A549 (cell line): ENCODE measurements at regions of chr18 and their contacts with region 1.

Region 1: GRCh38 chr18:57898506-57899124 is 95.5 kb upstream of the ATP8B1 start:
- DNase-seq: peak in 1 of 2 experiments; percentile 16
- ATAC-seq: no peak
- H3K4me3 ChIP-seq: no peak overlapping the region
- H3K27ac ChIP-seq: peak overlapping the region; percentile 51 to 98
- H3K4me1 ChIP-seq: peaks cover 41% of the 10 kb centered on the region
- CTCF ChIP-seq: no peak
- EP300 ChIP-seq: no peak
- POLR2A ChIP-seq: no peak
- RAD21 ChIP-seq: no peak

Region 2: DNA sequence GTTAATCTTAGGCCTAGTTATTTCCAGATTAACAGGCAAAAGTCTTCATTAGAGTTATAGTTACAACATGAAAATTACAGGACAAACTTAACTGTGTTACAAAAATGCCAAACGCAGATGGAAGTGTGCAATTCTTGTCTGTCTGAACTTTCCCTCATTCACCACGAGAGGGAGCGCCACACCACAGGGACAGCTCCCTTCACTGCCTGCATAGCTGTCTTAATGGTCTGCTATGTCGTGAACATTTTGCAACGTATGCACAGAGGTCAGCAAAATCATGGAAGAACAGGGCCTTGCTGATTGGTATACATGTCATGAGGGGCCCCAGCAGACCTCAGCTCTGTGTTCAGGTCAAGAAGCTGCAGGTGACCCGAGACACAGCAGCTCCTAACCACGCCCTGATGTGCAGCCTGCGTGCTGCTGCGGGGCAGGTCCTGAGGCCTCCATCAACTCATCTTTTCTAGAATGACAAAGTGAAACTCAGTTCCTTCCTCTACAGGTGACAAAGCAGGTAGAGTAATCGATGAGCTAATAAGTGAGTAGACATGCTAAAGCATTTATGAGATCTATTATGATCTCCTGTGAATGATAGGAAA is 16.7 kb before region 1 on chr18:
- CTCF ChIA-PET with region 1: interaction called, 16 read pairs
- POLR2A ChIA-PET with region 1: no interaction called
- DNase-seq: peak; percentile 20 to 84
- ATAC-seq: peak; percentile 94 to 98
- H3K4me3 ChIP-seq: no peak overlapping the region
- H3K27ac ChIP-seq: peak overlapping the region; percentile 67 to 77
- H3K4me1 ChIP-seq: peaks cover 16% of the 10 kb centered on the region
- CTCF ChIP-seq: peak; percentile 83
- EP300 ChIP-seq: no peak
- POLR2A ChIP-seq: no peak
- RAD21 ChIP-seq: peak; percentile 94 to 95

Region 3: DNA sequence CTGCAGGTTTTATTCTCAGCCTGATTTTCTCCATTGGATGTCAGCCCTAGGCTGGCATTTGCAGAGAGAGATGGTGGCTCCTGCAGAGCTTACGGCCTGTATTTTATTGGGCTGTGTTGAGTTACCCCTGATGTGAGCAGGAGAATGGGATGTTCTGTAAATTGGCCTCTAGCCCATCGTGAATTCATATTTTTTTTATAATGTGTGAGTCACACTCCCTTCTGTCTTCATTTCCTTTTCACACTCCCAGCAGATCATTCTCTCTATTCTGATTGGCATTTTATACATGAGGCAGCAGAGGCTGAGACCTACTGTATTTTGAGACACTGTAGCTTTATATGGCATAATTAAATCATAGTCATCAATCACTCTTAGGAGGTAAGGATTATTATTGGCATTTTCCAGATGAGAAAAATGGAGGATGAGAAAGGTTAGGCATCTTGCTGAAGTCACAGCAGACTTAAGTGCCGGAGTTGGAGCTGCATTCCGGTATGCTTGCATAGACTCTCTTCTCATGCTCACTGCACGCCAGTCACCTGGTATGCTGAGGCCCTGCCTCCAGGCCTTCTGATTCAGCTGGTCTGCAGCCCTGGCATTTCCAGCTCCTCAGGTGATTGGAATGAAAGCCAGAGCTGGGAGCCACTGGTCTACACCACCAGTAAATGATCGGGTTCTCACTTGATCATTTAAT is 287.8 kb after region 1 on chr18:
- CTCF ChIA-PET with region 1: no interaction called
- POLR2A ChIA-PET with region 1: no interaction called
- DNase-seq: peak in 1 of 2 experiments; percentile 62
- ATAC-seq: peak; percentile 86 to 93
- H3K4me3 ChIP-seq: no peak overlapping the region
- H3K27ac ChIP-seq: peak overlapping the region; percentile 52 to 80
- H3K4me1 ChIP-seq: peaks cover 47% of the 10 kb centered on the region
- CTCF ChIP-seq: no peak
- EP300 ChIP-seq: no peak
- POLR2A ChIP-seq: no peak
- RAD21 ChIP-seq: no peak